ENCODE measurements at regions of chr1 and their contacts with region 1.

Region 1: DNA sequence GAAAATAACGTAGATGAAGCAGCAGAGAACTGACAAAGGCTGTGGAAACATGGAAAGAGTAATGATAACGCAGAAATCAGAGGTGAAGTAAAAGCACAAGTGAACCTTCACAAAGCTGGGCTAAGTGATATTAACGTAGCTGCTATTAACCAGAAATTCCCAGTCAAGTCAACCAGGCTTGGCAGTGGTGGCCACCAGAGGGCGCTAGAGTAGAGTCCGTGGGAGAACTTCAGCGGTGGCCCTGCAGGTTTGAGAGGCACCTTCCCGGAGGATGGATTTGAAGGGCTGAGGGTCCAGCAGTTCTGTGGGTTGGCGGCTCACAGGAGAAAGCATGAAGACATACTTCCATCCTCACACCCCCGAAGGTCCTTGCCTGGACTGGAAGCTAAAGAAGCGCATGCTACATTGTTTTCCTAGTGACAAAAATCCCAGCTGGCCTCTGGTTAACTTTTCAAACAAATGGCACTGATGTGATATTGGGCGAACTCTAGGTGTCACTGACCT is 81.7 kb upstream of the ZNF648 start:
- DNase-seq: peak; percentile 97
- H3K4me3 ChIP-seq: no peak overlapping the region
- H3K27ac ChIP-seq: peak overlapping the region; percentile 84
- H3K4me1 ChIP-seq: peaks cover 14% of the 10 kb centered on the region
- H3K27me3 ChIP-seq: no peaks in the 10 kb centered on the region
- CTCF ChIP-seq: peak; percentile 88

Region 2: DNA sequence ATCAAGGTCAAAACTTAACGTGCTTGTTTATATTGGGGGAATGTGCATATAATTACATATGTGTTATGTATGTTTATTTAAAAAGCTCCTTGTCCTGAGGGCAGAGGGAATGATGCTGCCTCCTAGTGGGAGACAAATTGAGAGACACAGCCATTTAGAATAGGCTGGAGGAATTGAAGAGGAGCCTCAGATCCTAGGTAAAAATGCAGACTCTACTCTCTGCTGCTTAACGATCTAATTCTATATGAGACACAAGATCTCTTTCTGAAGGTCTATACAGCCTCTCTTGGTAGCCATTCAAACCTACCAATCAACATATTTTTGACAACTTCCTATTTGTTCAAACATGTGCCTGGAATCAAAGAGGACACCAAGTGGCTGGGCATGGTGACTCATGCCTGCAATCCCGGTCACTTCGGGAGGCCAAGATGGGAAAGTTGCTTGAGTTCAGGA is 54.9 kb after region 1 on chr1:
- intact Hi-C with region 1: loop called (anchors 5 kb)
- DNase-seq: no peak
- H3K4me3 ChIP-seq: no peak overlapping the region
- H3K27ac ChIP-seq: no peak overlapping the region
- H3K4me1 ChIP-seq: no peaks in the 10 kb centered on the region
- H3K27me3 ChIP-seq: no peaks in the 10 kb centered on the region
- CTCF ChIP-seq: peak; percentile 13

Region 3: DNA sequence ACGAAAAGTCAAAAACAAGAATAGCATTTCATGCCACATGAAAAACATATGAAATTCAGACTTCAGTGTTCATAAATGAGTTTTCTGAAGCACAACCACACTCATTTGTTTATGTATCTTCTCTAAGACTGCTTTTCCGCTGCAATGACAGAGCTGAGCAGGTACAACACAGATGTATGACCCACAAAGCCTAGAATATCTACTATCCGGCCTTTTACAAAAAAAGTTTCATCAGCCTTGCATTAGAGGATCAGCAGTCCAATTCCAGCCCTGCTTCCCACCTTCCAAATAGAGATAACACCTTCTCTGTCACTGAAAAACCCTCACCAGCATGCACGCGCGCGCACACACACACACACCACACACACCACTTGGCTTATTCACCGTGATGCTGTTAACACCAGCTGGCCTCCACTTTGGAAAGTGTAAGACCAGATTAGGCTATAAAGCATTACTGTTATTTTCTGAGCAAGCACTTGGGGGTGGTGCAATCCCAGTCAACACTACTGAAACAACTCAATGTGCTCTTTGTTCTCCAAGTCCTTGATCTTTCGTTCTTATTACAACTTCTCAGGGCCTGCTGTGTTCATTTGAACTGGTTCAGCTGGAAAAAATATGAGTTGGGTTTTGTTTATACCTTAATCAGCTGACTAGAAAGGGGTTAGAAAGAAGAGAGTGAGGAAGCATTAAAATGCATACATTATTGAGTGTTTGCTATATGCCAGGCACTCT is 158.4 kb after region 1 on chr1:
- intact Hi-C with region 1: loop called (anchors 10 kb)
- DNase-seq: peak; percentile 68
- H3K4me3 ChIP-seq: no peak overlapping the region
- H3K27ac ChIP-seq: peak overlapping the region; percentile 57
- H3K4me1 ChIP-seq: peaks cover 13% of the 10 kb centered on the region
- H3K27me3 ChIP-seq: no peaks in the 10 kb centered on the region
- CTCF ChIP-seq: no peak

Region 4: GRCh38 chr1:182397771-182398393 is 254.7 kb after region 1 on chr1:
- intact Hi-C with region 1: loop called (anchors 1 kb)
- DNase-seq: no peak
- H3K4me3 ChIP-seq: no peak overlapping the region
- H3K27ac ChIP-seq: no peak overlapping the region
- H3K4me1 ChIP-seq: no peaks in the 10 kb centered on the region
- H3K27me3 ChIP-seq: no peaks in the 10 kb centered on the region
- CTCF ChIP-seq: no peak

Measured in colonic mucosa (tissue), 4 donors.